ENCODE measurements at regions of chr3 and their contacts with region 1.

Region 1: DNA sequence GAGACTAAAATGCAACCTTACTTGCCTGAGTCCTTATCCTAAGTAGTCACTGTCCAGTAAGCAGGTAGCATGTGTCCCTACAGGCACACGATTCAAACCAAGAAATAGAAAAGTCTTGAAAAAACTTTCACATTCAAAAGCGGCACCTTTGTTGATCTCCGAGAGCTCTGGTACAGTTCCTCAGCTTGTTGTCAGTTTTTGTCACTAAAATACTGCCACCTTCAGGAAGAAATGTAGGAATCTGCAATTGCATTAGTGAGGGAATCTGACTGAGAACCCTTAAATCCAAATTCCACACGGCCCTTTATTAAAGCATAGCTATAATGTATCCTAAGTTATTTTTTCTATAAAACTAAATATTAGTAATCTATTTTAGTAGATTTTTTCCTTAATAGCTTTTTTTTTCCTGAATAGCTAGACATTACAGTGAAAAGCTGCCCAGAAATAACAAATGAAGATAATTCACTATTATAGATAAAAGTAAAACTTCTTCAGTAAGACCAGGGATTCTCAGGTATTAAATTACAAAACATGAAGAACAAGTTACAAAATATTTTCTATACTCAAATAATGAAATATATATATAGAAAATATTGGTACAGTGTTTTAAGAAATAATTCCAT is 44.0 kb downstream of the CCDC54 start:
- DNase-seq: peak; percentile 65
- H3K4me3 ChIP-seq: peak overlapping the region in 1 of 3 experiments; percentile 69
- H3K27ac ChIP-seq: no peak overlapping the region
- H3K4me1 ChIP-seq: peaks cover 2% of the 10 kb centered on the region
- H3K27me3 ChIP-seq: peaks cover 3 to 13% of the 10 kb centered on the region in 2 experiments
- CTCF ChIP-seq: peak; percentile 52 to 55
- POLR2A ChIP-seq: no peak

Region 2: DNA sequence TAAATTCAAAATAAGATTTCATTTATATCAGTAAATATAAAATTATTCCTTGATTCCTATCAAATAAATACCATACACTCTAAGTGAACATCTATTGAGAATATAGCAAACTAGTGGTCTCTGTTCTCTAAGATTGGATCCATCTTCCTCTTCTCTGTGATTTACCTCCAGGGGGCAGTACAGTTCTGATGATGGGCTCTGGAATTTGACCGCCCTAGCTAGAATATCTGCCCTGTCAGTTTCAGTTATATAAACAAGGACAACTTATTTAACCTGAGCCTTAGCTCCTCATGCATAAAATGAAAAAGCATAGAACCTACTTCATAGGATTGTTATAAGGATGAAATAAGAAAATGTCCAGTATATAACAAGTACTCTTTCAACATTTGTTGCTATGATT is 215.1 kb before region 1 on chr3:
- CTCF ChIA-PET with region 1: interaction called, 14 read pairs
- POLR2A ChIA-PET with region 1: no interaction called
- dilution Hi-C with region 1: no loop called
- intact Hi-C with region 1: no loop called
- DNase-seq: peak; percentile 28
- H3K4me3 ChIP-seq: no peak overlapping the region
- H3K27ac ChIP-seq: no peak overlapping the region
- H3K4me1 ChIP-seq: peaks cover 22% of the 10 kb centered on the region
- H3K27me3 ChIP-seq: no peaks in the 10 kb centered on the region
- CTCF ChIP-seq: peak; percentile 34 to 39
- POLR2A ChIP-seq: no peak

Region 3: GRCh38 chr3:107260207-107260606 is 161.1 kb before region 1 on chr3:
- CTCF ChIA-PET with region 1: interaction called, 11 read pairs
- POLR2A ChIA-PET with region 1: no interaction called
- dilution Hi-C with region 1: no loop called
- intact Hi-C with region 1: no loop called
- DNase-seq: no peak
- H3K4me3 ChIP-seq: no peak overlapping the region
- H3K27ac ChIP-seq: no peak overlapping the region
- H3K4me1 ChIP-seq: peaks cover 2% of the 10 kb centered on the region
- H3K27me3 ChIP-seq: peaks cover 0 to 1% of the 10 kb centered on the region in 2 experiments
- CTCF ChIP-seq: no peak
- POLR2A ChIP-seq: no peak

Region 4: GRCh38 chr3:107271787-107272387 is 149.4 kb before region 1 on chr3:
- CTCF ChIA-PET with region 1: interaction called, 96 read pairs
- POLR2A ChIA-PET with region 1: no interaction called
- dilution Hi-C with region 1: no loop called
- intact Hi-C with region 1: loop called (anchors 1 kb)
- DNase-seq: peak; percentile 36
- H3K4me3 ChIP-seq: no peak overlapping the region
- H3K27ac ChIP-seq: no peak overlapping the region
- H3K4me1 ChIP-seq: no peaks in the 10 kb centered on the region
- H3K27me3 ChIP-seq: peaks cover 4 to 23% of the 10 kb centered on the region in 2 experiments
- CTCF ChIP-seq: peak; percentile 30 to 33
- POLR2A ChIP-seq: no peak

Region 5: GRCh38 chr3:107284612-107285011 is 136.7 kb before region 1 on chr3:
- CTCF ChIA-PET with region 1: interaction called, 15 read pairs
- POLR2A ChIA-PET with region 1: no interaction called
- dilution Hi-C with region 1: no loop called
- intact Hi-C with region 1: no loop called
- DNase-seq: no peak
- H3K4me3 ChIP-seq: no peak overlapping the region
- H3K27ac ChIP-seq: no peak overlapping the region
- H3K4me1 ChIP-seq: no peaks in the 10 kb centered on the region
- H3K27me3 ChIP-seq: peaks cover 5 to 16% of the 10 kb centered on the region in 2 experiments
- CTCF ChIP-seq: no peak
- POLR2A ChIP-seq: no peak

Region 6: GRCh38 chr3:107404727-107405469 is 16.4 kb before region 1 on chr3:
- CTCF ChIA-PET with region 1: interaction called, 29 read pairs
- POLR2A ChIA-PET with region 1: no interaction called
- dilution Hi-C with region 1: no loop called
- intact Hi-C with region 1: no loop called
- DNase-seq: no peak
- H3K4me3 ChIP-seq: no peak overlapping the region
- H3K27ac ChIP-seq: no peak overlapping the region
- H3K4me1 ChIP-seq: no peaks in the 10 kb centered on the region
- H3K27me3 ChIP-seq: peaks cover 0 to 3% of the 10 kb centered on the region in 2 experiments
- CTCF ChIP-seq: no peak
- POLR2A ChIP-seq: no peak

Region 7: DNA sequence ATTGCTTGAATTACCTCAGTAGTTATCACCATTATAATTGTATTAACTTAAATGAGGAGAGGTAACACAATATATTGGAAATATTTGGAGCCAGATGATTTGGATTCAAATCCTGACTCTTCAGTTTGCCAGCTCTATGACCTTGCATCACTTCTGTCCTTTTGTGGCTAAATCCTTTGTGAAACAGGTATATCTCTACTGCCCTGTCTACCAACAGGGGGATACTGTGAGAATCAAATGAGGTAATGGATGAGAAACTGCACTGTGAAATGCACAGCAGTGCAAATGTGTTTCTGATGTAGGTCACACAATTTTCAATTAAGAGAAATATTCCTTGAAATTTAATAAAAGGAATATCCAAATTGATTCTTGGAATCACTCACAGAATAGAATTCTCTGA is 14.7 kb after region 1 on chr3:
- CTCF ChIA-PET with region 1: interaction called, 88 read pairs
- POLR2A ChIA-PET with region 1: no interaction called
- dilution Hi-C with region 1: no loop called
- intact Hi-C with region 1: no loop called
- DNase-seq: no peak
- H3K4me3 ChIP-seq: no peak overlapping the region
- H3K27ac ChIP-seq: no peak overlapping the region
- H3K4me1 ChIP-seq: peaks cover 7% of the 10 kb centered on the region
- H3K27me3 ChIP-seq: peaks cover 4 to 6% of the 10 kb centered on the region in 2 experiments
- CTCF ChIP-seq: no peak
- POLR2A ChIP-seq: no peak

Region 8: GRCh38 chr3:107727102-107727501 is 305.8 kb after region 1 on chr3:
- CTCF ChIA-PET with region 1: no interaction called
- POLR2A ChIA-PET with region 1: no interaction called
- dilution Hi-C with region 1: no loop called
- intact Hi-C with region 1: no loop called
- DNase-seq: no peak
- H3K4me3 ChIP-seq: no peak overlapping the region
- H3K27ac ChIP-seq: no peak overlapping the region
- H3K4me1 ChIP-seq: no peaks in the 10 kb centered on the region
- H3K27me3 ChIP-seq: no peaks in the 10 kb centered on the region
- CTCF ChIP-seq: no peak
- POLR2A ChIP-seq: no peak